Aorta (tissue), 5 donors: ENCODE measurements at regions of chr2 and their contacts with region 1.

Region 1: DNA sequence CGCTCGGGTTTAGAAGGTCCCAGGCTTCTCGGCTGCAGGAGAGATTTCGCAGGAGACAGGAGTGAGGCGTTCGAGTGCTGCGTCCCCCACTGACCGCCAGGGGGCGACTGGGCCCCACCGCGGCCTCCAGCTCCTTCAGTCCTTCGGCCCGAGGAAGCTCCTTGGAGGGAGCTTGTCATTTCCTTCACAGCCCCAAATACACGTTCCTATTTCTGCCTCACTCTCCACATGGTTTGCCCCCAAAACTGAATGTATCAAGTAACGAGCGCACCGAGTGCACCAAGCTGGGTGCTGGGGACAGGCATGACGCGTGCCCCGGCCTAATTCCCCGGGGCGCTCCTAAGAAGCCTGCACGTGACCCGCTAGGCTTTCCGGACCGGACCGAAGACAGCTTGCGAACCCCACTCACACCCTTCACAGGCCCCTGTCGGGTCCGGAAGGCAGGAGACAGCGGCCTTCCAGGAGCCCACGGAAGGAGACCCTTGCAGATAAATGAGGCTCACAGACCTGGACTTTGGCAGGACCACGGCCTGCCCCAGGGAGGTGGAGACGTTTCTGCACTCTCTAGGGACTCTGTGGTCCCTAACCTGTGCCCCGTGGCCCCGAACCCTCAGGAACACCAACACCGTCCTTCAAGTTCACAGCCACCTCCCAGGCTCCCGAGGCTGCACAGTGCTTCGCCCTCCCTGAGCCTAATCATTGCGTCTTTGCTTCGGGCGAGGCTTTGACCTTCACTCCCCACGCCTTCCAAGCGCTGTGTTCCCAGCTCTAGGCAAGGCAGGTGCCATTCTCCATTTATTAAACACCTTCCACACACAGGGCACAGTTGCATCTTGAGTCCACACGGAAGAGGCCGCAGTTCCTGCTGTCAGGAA is 13.0 kb upstream of the FAHD2A start:
- DNase-seq: peak in 1 of 2 donors; percentile 86
- ATAC-seq: peak; percentile 48
- H3K4me3 ChIP-seq: no peak overlapping the region
- H3K27ac ChIP-seq: no peak overlapping the region
- H3K4me1 ChIP-seq: no peaks in the 10 kb centered on the region
- H3K27me3 ChIP-seq: no peaks in the 10 kb centered on the region

Region 2: DNA sequence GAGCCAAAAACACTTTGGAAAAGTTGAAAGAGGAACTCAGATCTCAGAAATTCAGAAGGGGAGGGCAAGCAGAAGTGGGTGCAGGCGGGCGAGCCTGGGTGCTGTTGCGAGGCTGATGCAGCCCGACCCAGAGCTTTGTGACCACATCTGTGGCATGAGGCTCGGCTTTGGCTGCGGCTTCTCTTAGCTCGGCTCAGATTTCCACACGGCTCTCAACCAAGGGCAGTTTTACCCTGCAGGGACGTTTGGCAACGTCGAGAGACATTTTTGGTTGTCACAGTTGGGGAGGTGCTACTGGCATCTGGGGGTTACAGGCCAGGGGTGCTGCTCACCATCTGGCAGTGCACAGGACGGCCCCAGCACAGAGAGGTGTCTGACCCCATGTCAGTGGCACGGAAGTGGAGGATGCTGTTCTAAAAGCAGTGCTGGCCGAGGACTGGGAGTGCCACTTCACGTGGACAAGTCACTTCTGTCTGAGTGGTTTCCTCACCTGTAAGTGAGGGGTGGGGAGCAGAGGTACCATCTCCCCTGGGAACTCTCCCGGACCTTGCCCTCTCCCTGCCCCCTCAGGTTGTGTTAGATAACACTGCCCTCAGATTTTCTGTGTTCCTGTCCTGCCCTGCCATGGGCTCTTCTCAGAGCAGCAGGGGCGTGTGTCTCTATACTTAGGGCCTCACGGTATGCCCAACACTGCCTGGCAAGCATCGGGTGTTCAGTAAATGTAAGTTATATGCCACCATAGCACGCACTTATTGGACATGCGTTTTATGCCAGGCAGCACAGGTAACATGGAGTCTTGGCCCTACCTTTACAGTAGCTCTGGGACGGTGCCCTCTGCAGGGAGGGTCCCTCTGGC is 35.6 kb before region 1 on chr2:
- intact Hi-C with region 1: loop called in 1 of 2 experiments (anchors 5 kb)
- DNase-seq: peak in 1 of 2 donors; percentile 57
- ATAC-seq: no peak
- H3K4me3 ChIP-seq: no peak overlapping the region
- H3K27ac ChIP-seq: no peak overlapping the region
- H3K4me1 ChIP-seq: no peaks in the 10 kb centered on the region
- H3K27me3 ChIP-seq: no peaks in the 10 kb centered on the region